Aorta (tissue), 5 donors: ENCODE measurements at regions of chr5 and their contacts with region 1.

Region 1: DNA sequence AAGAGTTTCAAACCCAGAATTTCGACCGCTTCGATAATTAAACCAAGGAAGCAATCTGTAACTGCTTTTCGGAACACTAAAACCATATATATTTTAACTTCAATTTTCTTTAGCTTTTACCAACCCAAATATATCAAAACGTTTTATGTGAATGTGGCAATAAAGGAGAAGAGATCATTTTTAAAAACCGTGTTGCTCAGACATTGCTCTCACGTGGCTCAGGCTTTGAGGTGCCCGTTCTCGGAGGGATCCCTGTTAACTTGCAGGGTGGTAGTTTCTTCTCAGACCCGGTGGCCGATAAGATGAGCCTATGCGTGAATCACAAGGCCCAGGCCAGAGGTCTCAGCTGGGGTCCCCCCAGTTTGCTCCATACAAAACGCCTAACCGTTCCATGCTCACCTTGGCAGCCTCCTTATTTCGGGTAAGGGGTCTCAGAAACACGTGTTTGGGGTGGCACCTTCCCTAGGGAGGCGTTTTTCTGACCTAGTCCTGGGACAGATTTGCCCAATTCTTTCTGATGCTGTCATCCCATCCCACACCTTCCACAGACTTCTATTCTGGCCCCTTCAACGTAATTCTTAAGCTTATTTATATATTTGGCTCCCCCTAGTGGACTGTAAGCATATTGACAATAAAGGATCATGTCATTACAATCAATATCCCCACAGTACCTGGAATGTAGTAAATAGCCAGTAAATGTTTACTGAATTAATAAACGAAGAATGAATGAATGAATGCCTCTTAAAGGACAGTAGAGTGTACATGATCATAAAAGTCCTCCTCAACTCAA is 48.1 kb downstream of the THBS4 start:
- DNase-seq: no peak
- ATAC-seq: peak; percentile 91
- H3K4me3 ChIP-seq: peak overlapping the region; percentile 4 to 60
- H3K27ac ChIP-seq: peak overlapping the region in 1 of 2 donors; percentile 80
- H3K4me1 ChIP-seq: no peaks in the 10 kb centered on the region
- H3K27me3 ChIP-seq: no peaks in the 10 kb centered on the region

Region 2: DNA sequence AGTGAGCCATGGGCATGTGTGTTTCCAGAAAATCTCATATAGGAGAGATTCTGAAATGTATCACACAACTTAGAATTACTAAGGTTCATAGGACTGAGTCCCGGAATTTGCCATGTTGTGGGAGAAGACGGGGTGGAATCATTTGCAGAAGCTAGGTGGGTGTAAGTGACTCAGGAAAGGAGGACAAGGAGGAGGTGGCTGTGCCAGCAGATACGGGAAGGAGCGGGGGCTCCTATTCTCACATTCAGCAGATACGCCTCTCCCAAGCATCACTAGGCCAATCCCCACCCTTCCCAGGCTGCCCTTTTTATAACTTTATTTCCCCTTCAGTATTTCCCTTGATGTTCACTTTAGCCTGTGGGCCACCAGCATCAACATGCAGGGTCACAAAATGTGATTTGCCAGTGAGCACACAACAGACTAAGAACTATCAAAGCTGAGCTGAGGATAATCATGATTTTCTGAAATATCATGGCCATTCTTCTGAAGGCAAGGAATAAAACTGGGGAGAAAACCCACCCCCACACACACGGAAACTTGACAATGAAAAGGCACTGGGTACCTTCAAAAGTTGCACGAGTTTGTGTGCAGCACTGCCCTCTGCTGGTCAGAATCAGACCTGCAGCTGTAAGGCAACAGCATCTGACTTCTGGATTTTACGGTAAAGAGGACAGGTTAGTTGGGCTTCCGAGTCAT is 225.4 kb before region 1 on chr5:
- intact Hi-C with region 1: loop called in 1 of 2 experiments (anchors 2 kb)
- DNase-seq: peak; percentile 78 to 92
- ATAC-seq: peak; percentile 72
- H3K4me3 ChIP-seq: no peak overlapping the region
- H3K27ac ChIP-seq: no peak overlapping the region
- H3K4me1 ChIP-seq: no peaks in the 10 kb centered on the region
- H3K27me3 ChIP-seq: no peaks in the 10 kb centered on the region

Region 3: GRCh38 chr5:79962575-79963222 is 120.6 kb before region 1 on chr5:
- intact Hi-C with region 1: no loop called
- DNase-seq: no peak
- ATAC-seq: no peak
- H3K4me3 ChIP-seq: no peak overlapping the region
- H3K27ac ChIP-seq: no peak overlapping the region
- H3K4me1 ChIP-seq: no peaks in the 10 kb centered on the region
- H3K27me3 ChIP-seq: no peaks in the 10 kb centered on the region

Region 4: DNA sequence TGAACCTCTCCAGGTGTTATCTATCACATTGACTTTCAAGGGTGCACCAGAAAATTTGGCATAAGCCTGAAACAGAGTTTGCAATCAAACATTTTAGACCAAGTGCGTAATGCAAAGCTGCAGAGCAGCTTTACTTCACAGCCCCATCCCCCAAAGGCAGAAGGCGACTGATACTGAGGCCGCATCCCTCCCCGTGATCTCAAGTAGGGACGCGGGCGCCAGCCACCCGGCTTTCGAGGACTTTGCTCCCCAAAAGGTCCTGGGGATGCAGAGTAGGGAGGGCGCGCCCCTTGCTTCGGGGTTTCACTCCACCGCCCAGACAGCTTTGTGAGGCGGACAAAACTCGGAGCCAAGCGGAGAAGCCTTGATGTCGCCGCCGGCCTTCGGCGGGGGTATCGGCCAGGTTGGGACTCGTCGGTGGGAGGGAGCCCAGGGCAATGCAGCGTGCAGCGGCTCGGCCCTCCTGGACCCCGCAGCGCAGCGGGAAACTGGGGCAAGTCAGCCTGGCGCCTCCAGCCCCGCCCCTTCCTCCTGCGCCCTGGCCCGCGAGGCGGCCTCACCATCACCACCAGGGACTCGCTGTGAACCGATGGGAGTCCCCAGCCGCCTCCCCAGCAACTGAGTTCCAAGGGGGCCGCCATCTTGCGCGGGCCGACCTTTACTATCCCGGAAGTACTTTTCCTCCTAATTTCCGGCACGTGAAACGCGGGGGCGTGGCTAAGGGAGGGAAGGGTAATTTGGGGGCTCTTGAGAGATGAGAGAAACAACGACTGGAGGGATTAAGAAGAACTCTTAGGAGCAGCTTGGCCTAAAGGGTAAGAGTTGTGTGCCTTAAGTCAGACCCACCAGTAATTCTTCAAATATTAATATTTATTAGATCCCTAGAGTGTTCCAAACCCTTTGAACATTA is 92.4 kb before region 1 on chr5 and contains the start of gene MTX3:
- intact Hi-C with region 1: loop called in 1 of 2 experiments (anchors 5 kb)
- DNase-seq: peak; percentile 91 to 95
- ATAC-seq: peak; percentile 93
- H3K4me3 ChIP-seq: peak within 1 kb of the TSS; percentile 71 to 80
- H3K27ac ChIP-seq: peak within 1 kb of the TSS in 1 of 2 donors; percentile 66
- H3K4me1 ChIP-seq: peaks cover 0 to 3% of the 10 kb centered on the region in 2 donors
- H3K27me3 ChIP-seq: no peaks in the 10 kb centered on the region
- total RNA-seq, gene MTX3: 11.8 to 16.6 TPM

Region 5: GRCh38 chr5:80041527-80041926 is 41.8 kb before region 1 on chr5:
- intact Hi-C with region 1: no loop called
- DNase-seq: no peak
- ATAC-seq: no peak
- H3K4me3 ChIP-seq: no peak overlapping the region
- H3K27ac ChIP-seq: no peak overlapping the region
- H3K4me1 ChIP-seq: no peaks in the 10 kb centered on the region
- H3K27me3 ChIP-seq: no peaks in the 10 kb centered on the region